PC-3 (cell line): ENCODE measurements at regions of chr9 and their contacts with region 1.

Region 1: DNA sequence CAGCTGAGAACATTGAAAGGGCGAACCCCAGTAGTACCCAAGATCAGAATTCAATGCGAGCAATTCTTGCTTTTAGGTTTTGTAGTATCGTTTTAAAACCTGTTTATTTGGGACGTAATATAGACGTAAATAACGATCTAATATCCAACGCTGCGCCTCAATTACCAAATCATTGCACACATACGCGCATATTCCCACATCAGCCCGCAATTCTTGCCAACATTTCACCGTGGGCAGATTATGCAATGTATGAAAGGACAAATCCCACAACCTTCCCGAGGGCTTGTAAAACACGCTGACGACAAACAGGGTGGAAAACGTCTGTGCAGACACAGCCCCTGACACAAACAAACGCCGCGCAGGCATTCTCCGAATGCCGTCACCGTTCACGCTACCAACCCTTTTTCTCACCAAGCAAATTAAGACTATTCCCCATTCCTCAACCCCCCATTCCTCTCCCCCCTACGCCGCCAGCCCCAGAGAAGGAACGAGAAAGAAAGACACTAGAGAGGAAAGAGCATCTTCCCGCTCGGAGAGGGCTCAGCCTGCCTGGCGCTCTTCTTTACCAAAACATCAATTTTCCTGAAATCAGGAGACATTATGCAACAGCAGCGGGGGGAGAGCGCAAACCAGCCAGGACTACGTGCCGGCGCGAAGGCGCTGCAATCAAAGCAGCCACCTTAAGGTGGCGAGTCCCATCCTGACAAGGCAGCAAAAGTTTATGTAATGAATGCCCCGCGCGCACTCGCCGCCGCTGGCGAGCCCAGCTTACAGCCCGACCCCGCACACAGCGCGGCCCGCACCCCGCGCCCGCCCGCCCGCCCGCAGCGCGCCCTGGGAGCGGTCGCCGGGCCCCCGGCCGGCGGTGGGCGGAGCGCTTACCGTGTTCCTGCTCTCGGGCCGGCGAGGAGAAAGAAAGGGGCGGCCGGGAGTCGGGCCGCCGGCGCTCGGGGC is 597 bp downstream of the NFIL3 start:
- DNase-seq: peak; percentile 47
- ATAC-seq: peak; percentile 18
- H3K4me3 ChIP-seq: peak overlapping the region; percentile 96
- H3K27ac ChIP-seq: peak overlapping the region; percentile 71
- H3K4me1 ChIP-seq: peaks cover 38% of the 10 kb centered on the region
- H3K27me3 ChIP-seq: no peaks in the 10 kb centered on the region
- CTCF ChIP-seq: no peak

Region 2: GRCh38 chr9:90985631-90986030 is 437.4 kb before region 1 on chr9:
- CTCF ChIA-PET with region 1: interaction called, 3 read pairs
- POLR2A ChIA-PET with region 1: interaction called, 5 read pairs
- intact Hi-C with region 1: loop called (anchors 2 kb)
- DNase-seq: no peak
- ATAC-seq: no peak
- H3K4me3 ChIP-seq: no peak overlapping the region
- H3K27ac ChIP-seq: peak overlapping the region; percentile 26; the same call in 1 of the 2 replicates
- H3K4me1 ChIP-seq: peaks cover 4% of the 10 kb centered on the region; the same call in 1 of the 2 replicates
- H3K27me3 ChIP-seq: no peaks in the 10 kb centered on the region
- CTCF ChIP-seq: no peak

Region 3: GRCh38 chr9:91036826-91037510 is 386.1 kb before region 1 on chr9:
- CTCF ChIA-PET with region 1: no interaction called
- POLR2A ChIA-PET with region 1: no interaction called
- intact Hi-C with region 1: loop called (anchors 1 kb)
- DNase-seq: peak; percentile 85
- ATAC-seq: peak; percentile 91
- H3K4me3 ChIP-seq: peak overlapping the region; percentile 32; the same call in 1 of the 2 replicates
- H3K27ac ChIP-seq: peak overlapping the region; percentile 88
- H3K4me1 ChIP-seq: peaks cover 27% of the 10 kb centered on the region
- H3K27me3 ChIP-seq: no peaks in the 10 kb centered on the region
- CTCF ChIP-seq: peak; percentile 68

Region 4: DNA sequence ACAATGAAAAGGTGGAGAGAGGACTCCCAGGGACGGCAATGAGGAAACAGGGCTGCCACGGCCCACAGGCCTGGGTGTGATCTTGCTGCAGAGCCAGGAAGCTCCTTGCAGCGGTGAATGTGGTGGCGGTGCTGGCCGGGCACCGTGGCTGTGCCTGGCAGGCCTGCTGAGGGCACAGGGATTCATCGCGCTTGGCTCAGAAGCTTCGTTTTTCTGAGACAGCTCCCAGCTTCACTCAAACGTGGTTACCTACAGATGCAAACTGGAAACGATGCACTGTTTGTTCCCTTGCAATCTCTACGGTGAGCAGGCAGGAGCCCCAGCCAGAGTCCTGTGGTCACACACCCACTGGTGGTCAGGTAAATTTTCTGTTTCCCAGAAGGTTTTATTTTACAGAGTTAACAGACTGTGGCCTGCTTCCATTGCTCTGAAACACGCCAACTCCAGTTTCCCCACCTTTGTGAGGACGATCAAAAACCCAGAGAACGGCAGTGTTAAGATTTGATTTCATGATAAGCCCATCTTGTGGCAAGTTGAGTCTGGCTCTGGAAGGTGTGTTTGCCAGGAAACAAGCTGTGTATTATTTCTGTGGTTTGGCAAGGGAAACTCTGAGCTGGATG is 245.3 kb before region 1 on chr9:
- CTCF ChIA-PET with region 1: no interaction called
- POLR2A ChIA-PET with region 1: interaction called, 13 read pairs
- intact Hi-C with region 1: no loop called
- DNase-seq: peak; percentile 74
- ATAC-seq: peak; percentile 57
- H3K4me3 ChIP-seq: no peak overlapping the region
- H3K27ac ChIP-seq: peak overlapping the region; percentile 94
- H3K4me1 ChIP-seq: peaks cover 33% of the 10 kb centered on the region
- H3K27me3 ChIP-seq: no peaks in the 10 kb centered on the region
- CTCF ChIP-seq: no peak

Region 5: GRCh38 chr9:91301161-91301560 is 121.9 kb before region 1 on chr9:
- CTCF ChIA-PET with region 1: no interaction called
- POLR2A ChIA-PET with region 1: no interaction called
- intact Hi-C with region 1: loop called (anchors 5 kb)
- DNase-seq: peak; percentile 35
- ATAC-seq: no peak
- H3K4me3 ChIP-seq: 0 out of 2 replicates have a peak overlapping the region, but pooled peaks have one; percentile 21
- H3K27ac ChIP-seq: peak overlapping the region; percentile 61
- H3K4me1 ChIP-seq: peaks cover 31% of the 10 kb centered on the region
- H3K27me3 ChIP-seq: no peaks in the 10 kb centered on the region
- CTCF ChIP-seq: no peak

Region 6: DNA sequence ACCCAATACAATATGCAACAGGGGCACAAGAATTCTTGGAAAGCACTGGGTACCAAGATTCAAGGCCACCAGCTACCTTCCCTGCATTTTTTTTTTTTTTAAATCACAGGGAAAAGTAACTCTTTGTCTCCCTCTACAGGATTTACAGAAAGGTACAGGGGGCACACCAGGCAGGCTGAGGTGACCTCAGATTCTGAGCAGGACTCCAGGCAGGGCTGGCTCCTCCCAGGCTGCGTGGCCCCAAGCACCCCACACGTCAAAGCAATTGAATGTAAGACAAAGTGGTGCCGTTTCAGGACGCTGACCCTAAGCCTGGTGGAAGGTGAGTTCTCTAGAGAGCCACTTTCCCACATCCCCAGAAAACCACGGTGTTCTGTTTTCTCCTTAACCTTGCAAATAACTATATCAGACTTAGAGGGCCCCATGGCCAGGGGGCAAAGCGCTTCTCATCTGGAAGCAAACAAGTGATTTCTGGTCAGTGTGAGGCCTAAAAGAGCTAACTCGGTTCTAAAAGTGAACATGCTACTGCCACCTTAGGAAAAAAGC is 304.4 kb after region 1 on chr9:
- CTCF ChIA-PET with region 1: interaction called, 6 read pairs
- POLR2A ChIA-PET with region 1: no interaction called
- intact Hi-C with region 1: loop called (anchors 5 kb)
- DNase-seq: peak; percentile 61
- ATAC-seq: peak; percentile 75
- H3K4me3 ChIP-seq: no peak overlapping the region
- H3K27ac ChIP-seq: no peak overlapping the region
- H3K4me1 ChIP-seq: no peaks in the 10 kb centered on the region
- H3K27me3 ChIP-seq: no peaks in the 10 kb centered on the region
- CTCF ChIP-seq: peak; percentile 69